ENCODE measurements at regions of chr9 and their contacts with region 1.

Region 1: GRCh38 chr9:77456829-77457437 is 191.2 kb downstream of the GNA14 start:
- DNase-seq: peak; percentile 89 to 95
- H3K4me3 ChIP-seq: no peak overlapping the region
- H3K27ac ChIP-seq: peak overlapping the region in 2 of 3 donors; percentile 56 to 71
- H3K4me1 ChIP-seq: peaks cover 25 to 28% of the 10 kb centered on the region in 2 donors
- H3K27me3 ChIP-seq: no peaks in the 10 kb centered on the region
- CTCF ChIP-seq: peak; percentile 80 to 92 (median 86)
- POLR2A ChIP-seq: no peak

Region 2: GRCh38 chr9:77651203-77651602 is 194.3 kb after region 1 on chr9:
- intact Hi-C with region 1: loop called (anchors 10 kb)
- DNase-seq: no peak
- H3K4me3 ChIP-seq: no peak overlapping the region
- H3K27ac ChIP-seq: no peak overlapping the region
- H3K4me1 ChIP-seq: peaks cover 2 to 13% of the 10 kb centered on the region in 2 donors
- H3K27me3 ChIP-seq: no peaks in the 10 kb centered on the region
- CTCF ChIP-seq: no peak
- POLR2A ChIP-seq: no peak

Measured in thyroid gland (tissue), 4 donors.